ENCODE measurements at regions of chr16 and their contacts with region 1.

Region 1: DNA sequence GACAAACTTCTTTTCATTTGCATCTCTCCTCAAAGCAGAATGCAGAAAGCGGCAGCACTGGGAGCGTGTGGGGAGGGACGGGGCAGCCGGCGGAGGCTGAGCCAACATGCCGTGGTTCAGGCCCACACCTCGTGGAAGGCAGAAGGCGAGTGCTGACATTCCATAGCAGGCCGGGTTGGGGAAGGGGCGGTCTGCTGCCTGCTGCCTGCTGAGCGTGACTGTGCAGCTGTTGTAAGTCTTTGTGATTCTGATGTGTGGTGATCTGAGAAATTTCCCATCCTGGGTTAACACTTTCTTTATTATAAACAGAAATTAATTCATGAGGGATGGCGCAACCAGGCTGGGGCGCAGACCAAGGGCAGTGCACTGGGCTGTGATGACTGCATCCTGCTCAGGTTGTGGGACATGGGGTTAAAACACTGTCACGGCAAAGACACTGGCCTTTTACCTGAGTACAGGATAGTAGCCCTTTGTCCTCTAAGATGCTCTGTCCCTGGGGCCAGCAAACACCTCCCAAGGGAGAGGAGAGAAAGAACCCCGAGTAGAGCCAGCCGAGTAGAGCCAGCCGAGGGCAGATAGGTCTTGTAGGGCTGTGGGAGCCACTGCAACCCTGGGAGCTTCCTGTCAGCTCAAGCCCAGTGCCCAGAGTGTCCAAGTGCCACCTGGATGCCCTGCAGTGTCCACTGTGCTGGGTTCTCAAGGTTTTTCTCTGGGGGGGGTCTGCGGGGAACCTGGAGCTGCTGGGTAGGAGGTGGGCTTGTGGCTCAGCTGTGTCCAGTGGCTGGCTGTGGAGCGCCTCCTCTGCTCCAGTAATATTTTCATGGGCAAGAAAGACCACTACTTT is 8.8 kb upstream of the DNASE1 start:
- DNase-seq: no peak
- H3K4me3 ChIP-seq: 0 out of 2 replicates have a peak overlapping the region, but pooled peaks have one; percentile 0
- H3K27ac ChIP-seq: peak overlapping the region; percentile 51
- H3K4me1 ChIP-seq: peaks cover 49% of the 10 kb centered on the region
- H3K27me3 ChIP-seq: no peaks in the 10 kb centered on the region
- CTCF ChIP-seq: no peak

Region 2: DNA sequence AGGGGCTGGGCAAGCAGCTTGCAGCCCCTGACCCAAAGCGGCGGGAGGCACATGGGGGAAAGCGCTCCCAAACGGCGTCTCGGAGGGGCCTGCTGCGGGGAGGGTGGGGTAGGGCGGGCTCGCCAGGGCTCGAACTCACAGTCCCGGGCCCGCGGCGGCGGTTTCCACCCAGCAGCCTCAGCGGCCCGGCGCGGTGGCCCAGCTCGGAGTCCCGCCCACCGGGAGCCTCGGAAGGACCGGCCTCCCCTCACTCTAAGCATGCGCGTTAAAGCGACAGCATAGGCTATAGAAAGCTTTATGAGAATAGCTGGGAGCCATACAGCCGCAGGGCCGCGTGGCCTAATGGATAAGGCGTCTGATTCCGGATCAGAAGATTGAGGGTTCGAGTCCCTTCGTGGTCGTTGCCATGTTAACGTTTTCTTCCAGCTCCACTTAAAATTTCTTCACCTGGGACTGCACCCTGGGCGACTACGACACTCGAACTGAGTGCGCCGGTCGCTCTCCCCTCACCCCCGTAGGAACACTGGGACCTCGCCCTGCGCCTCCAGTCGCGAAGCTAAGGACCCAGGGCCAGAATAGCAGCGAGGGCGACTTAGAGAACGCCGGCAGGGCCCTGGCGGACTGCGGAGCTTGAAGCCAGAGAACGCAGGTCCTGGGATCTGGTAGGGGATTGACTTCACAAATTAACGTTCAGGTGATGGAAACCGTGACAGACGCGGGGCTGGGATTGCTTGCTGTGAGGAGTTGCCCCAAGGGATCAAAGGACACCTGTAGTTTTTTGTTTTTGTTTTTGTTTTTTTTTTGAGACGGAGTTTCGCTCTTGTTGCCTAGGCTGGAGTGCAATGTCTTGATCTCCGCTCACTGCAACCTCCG is 495.1 kb before region 1 on chr16:
- CTCF ChIA-PET with region 1: no interaction called
- POLR2A ChIA-PET with region 1: no interaction called
- intact Hi-C with region 1: loop called (anchors 10 kb)
- DNase-seq: peak; percentile 91 to 99
- H3K4me3 ChIP-seq: peak overlapping the region; percentile 99
- H3K27ac ChIP-seq: peak overlapping the region; percentile 75
- H3K4me1 ChIP-seq: peaks cover 6% of the 10 kb centered on the region
- H3K27me3 ChIP-seq: no peaks in the 10 kb centered on the region
- CTCF ChIP-seq: no peak

Region 3: DNA sequence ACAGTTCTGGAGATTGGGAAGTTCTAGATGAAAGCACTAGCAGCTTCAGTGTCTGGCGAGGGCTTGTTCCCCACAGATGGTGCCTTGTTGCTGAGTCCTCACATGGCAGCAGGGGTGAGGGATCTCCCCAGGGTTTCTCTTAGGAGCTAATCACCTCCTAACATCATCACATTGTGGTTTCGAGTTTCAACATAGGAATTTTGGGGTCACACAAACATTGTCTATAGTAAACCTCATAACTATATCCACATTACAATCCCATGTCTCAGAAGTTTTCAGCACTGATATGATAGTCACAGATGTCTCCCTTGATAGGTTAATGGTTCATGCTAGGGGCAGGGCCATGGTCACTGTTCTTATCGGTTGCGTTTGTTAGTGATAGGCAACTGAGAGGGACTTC is 131.1 kb before region 1 on chr16:
- CTCF ChIA-PET with region 1: no interaction called
- POLR2A ChIA-PET with region 1: interaction called, 11 read pairs
- intact Hi-C with region 1: no loop called
- DNase-seq: peak; percentile 68 to 94
- H3K4me3 ChIP-seq: no peak overlapping the region
- H3K27ac ChIP-seq: peak overlapping the region; percentile 59
- H3K4me1 ChIP-seq: peaks cover 35% of the 10 kb centered on the region
- H3K27me3 ChIP-seq: no peaks in the 10 kb centered on the region
- CTCF ChIP-seq: no peak

Region 4: GRCh38 chr16:3583303-3584038 is 62.3 kb before region 1 on chr16:
- CTCF ChIA-PET with region 1: interaction called, 11 read pairs
- POLR2A ChIA-PET with region 1: interaction called, 3 read pairs
- intact Hi-C with region 1: no loop called
- DNase-seq: no peak
- H3K4me3 ChIP-seq: no peak overlapping the region
- H3K27ac ChIP-seq: no peak overlapping the region
- H3K4me1 ChIP-seq: no peaks in the 10 kb centered on the region
- H3K27me3 ChIP-seq: no peaks in the 10 kb centered on the region
- CTCF ChIP-seq: no peak

Region 5: GRCh38 chr16:3618769-3619141 is 27.0 kb before region 1 on chr16:
- CTCF ChIA-PET with region 1: no interaction called
- POLR2A ChIA-PET with region 1: interaction called, 14 read pairs
- intact Hi-C with region 1: loop called (anchors 2 kb)
- DNase-seq: peak; percentile 59 to 79
- H3K4me3 ChIP-seq: no peak overlapping the region
- H3K27ac ChIP-seq: peak overlapping the region; percentile 61
- H3K4me1 ChIP-seq: peaks cover 13% of the 10 kb centered on the region; the same call in 1 of the 2 replicates
- H3K27me3 ChIP-seq: no peaks in the 10 kb centered on the region
- CTCF ChIP-seq: no peak

Measured in PC-9 (cell line).